Testis (tissue), 5 donors: ENCODE measurements at regions of chr16 and their contacts with region 1.

Region 1: GRCh38 chr16:4616047-4616811 is 1.5 kb upstream of the UBALD1 start:
- DNase-seq: peak; percentile 100
- H3K4me3 ChIP-seq: peak overlapping the region; percentile 61 to 82
- H3K27ac ChIP-seq: peak overlapping the region; percentile 94 to 98
- H3K4me1 ChIP-seq: peaks cover 32% of the 10 kb centered on the region
- H3K27me3 ChIP-seq: no peaks in the 10 kb centered on the region
- CTCF ChIP-seq: peak in 2 of 3 experiments; percentile 12 to 23
- POLR2A ChIP-seq: peak; percentile 55

Region 2: GRCh38 chr16:4693296-4693955 is 77.2 kb after region 1 on chr16 and contains the start of gene NUDT16L1:
- intact Hi-C with region 1: loop called (anchors 10 kb)
- DNase-seq: peak; percentile 96
- H3K4me3 ChIP-seq: peak within 1 kb of the TSS; percentile 86 to 88
- H3K27ac ChIP-seq: peak within 1 kb of the TSS; percentile 63 to 85
- H3K4me1 ChIP-seq: peaks cover 41% of the 10 kb centered on the region
- H3K27me3 ChIP-seq: no peaks in the 10 kb centered on the region
- CTCF ChIP-seq: peak in 2 of 3 experiments; percentile 35 to 57
- POLR2A ChIP-seq: no peak
- total RNA-seq, gene NUDT16L1: 33.6 to 48.6 TPM